ENCODE measurements at regions of chr5 and their contacts with region 1.

Region 1: GRCh38 chr5:68460147-68460798 is 244.7 kb downstream of the PIK3R1 start:
- DNase-seq: peak; percentile 32
- H3K4me3 Mint-ChIP-seq: no peak overlapping the region
- H3K27ac Mint-ChIP-seq: no peak overlapping the region
- H3K4me1 Mint-ChIP-seq: peaks cover 23% of the 10 kb centered on the region
- H3K27me3 Mint-ChIP-seq: no peaks in the 10 kb centered on the region

Region 2: DNA sequence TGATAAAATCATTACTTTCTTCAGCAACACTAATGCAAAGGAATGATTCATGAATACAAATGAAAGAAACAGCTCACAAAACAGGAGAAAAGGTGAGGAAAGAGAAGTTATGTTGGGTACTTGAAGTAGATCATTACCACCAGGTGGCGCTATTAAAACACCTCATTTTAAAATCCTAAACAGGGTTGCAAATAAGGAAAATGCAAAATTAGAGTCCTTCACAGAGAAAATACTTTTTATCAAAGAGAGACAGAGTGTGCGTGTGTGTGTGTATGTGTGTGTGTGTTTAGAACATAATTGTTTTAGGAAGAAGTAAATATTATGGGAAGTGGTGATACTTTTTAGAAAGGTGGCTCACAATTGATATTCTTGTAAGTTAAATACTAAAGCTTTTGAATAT is 1214.2 kb before region 1 on chr5:
- CTCF ChIA-PET with region 1: interaction called, 3 read pairs
- POLR2A ChIA-PET with region 1: no interaction called
- intact Hi-C with region 1: loop called (anchors 5 kb)
- DNase-seq: no peak
- H3K4me3 Mint-ChIP-seq: no peak overlapping the region
- H3K27ac Mint-ChIP-seq: no peak overlapping the region
- H3K4me1 Mint-ChIP-seq: peaks cover 8% of the 10 kb centered on the region
- H3K27me3 Mint-ChIP-seq: no peaks in the 10 kb centered on the region

Region 3: GRCh38 chr5:68279984-68280383 is 180.3 kb before region 1 on chr5:
- CTCF ChIA-PET with region 1: interaction called, 10 read pairs
- POLR2A ChIA-PET with region 1: interaction called, 11 read pairs
- intact Hi-C with region 1: no loop called
- DNase-seq: peak; percentile 60
- H3K4me3 Mint-ChIP-seq: peak overlapping the region; percentile 76
- H3K27ac Mint-ChIP-seq: peak overlapping the region; percentile 99
- H3K4me1 Mint-ChIP-seq: peaks cover 94% of the 10 kb centered on the region
- H3K27me3 Mint-ChIP-seq: no peaks in the 10 kb centered on the region

Region 4: DNA sequence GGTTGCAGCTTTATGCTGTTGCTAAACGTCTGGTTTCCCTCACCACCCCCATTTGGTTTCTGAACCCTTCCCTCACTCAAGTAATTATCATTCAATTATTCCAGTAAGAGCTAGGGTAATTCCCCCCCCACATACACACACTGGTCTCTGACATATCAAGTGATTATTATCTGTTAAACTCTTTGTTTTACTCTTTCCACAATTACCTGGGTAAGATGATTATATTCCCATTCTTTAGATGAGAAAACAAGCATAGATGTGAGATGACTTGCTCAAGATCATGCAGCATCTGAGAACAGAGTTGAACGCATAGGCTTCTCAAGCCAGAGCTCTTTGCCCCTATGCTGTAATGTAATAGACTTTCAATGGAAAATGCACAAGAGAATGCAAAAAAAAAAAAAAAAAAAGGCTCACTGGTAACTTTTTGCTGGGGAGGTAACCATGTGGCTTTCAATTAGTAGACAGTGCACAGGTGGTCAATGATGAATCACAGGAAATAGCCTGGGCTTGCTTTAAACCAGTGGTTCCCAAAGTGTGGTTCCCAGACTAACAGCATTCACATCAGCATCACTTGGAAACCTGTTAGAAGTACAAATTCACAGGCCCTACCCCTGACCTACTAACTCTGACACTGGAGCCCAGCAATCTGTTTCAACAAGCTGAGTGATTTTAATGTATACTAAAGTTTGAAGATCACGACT is 157.1 kb before region 1 on chr5:
- CTCF ChIA-PET with region 1: interaction called, 4 read pairs
- POLR2A ChIA-PET with region 1: interaction called, 3 read pairs
- intact Hi-C with region 1: loop called (anchors 1 kb)
- DNase-seq: no peak
- H3K4me3 Mint-ChIP-seq: no peak overlapping the region
- H3K27ac Mint-ChIP-seq: peak overlapping the region; percentile 57
- H3K4me1 Mint-ChIP-seq: peaks cover 49% of the 10 kb centered on the region
- H3K27me3 Mint-ChIP-seq: no peaks in the 10 kb centered on the region

Region 5: DNA sequence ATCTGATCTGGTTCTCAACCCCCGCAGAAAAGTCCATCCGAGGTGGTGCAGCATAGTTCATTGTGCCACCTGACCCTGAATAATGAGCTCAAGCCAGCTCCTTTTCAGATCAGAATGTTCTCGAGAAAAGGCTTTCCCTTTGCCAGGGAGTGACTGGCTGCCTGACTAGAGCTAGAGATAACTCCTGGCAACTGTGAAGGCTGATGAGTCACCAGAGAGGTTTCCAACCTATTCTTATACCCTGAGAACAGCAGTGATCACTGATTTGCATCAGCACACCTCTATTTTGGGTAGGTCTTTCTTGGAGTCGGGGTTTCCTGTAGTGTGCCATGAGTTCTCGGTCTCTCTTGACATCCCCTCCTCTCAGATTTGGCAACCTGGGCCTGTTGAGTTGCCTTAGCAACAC is 116.8 kb before region 1 on chr5:
- CTCF ChIA-PET with region 1: no interaction called
- POLR2A ChIA-PET with region 1: no interaction called
- intact Hi-C with region 1: loop called (anchors 1 kb)
- DNase-seq: peak; percentile 51
- H3K4me3 Mint-ChIP-seq: no peak overlapping the region
- H3K27ac Mint-ChIP-seq: no peak overlapping the region
- H3K4me1 Mint-ChIP-seq: peaks cover 27% of the 10 kb centered on the region
- H3K27me3 Mint-ChIP-seq: no peaks in the 10 kb centered on the region

Region 6: GRCh38 chr5:68369457-68370125 is 90.7 kb before region 1 on chr5:
- CTCF ChIA-PET with region 1: no interaction called
- POLR2A ChIA-PET with region 1: no interaction called
- intact Hi-C with region 1: loop called (anchors 1 kb)
- DNase-seq: peak; percentile 69
- H3K4me3 Mint-ChIP-seq: peak overlapping the region; percentile 13
- H3K27ac Mint-ChIP-seq: peak overlapping the region; percentile 36
- H3K4me1 Mint-ChIP-seq: peaks cover 35% of the 10 kb centered on the region
- H3K27me3 Mint-ChIP-seq: no peaks in the 10 kb centered on the region

Region 7: GRCh38 chr5:68424799-68425537 is 35.3 kb before region 1 on chr5:
- CTCF ChIA-PET with region 1: no interaction called
- POLR2A ChIA-PET with region 1: no interaction called
- intact Hi-C with region 1: loop called (anchors 1 kb)
- DNase-seq: peak; percentile 35
- H3K4me3 Mint-ChIP-seq: no peak overlapping the region
- H3K27ac Mint-ChIP-seq: no peak overlapping the region
- H3K4me1 Mint-ChIP-seq: peaks cover 42% of the 10 kb centered on the region
- H3K27me3 Mint-ChIP-seq: no peaks in the 10 kb centered on the region